Mammary epithelial cell (primary cell): ENCODE measurements at regions of chr17 and their contacts with region 1.

Region 1: GRCh38 chr17:10875979-10876555 is 38.2 kb upstream of the PIRT start:
- DNase-seq: peak; percentile 11
- H3K4me3 ChIP-seq: no peak overlapping the region
- H3K27ac ChIP-seq: no peak overlapping the region
- H3K4me1 ChIP-seq: no peaks in the 10 kb centered on the region
- H3K27me3 ChIP-seq: no peaks in the 10 kb centered on the region
- CTCF ChIP-seq: peak; percentile 34 to 62

Region 2: GRCh38 chr17:10798332-10798749 is 77.7 kb before region 1 on chr17:
- CTCF ChIA-PET with region 1: no interaction called
- dilution Hi-C with region 1: loop called (anchors 5 kb)
- in situ Hi-C with region 1: no loop called
- intact Hi-C with region 1: no loop called
- DNase-seq: no peak
- H3K4me3 ChIP-seq: no peak overlapping the region
- H3K27ac ChIP-seq: no peak overlapping the region
- H3K4me1 ChIP-seq: no peaks in the 10 kb centered on the region
- H3K27me3 ChIP-seq: no peaks in the 10 kb centered on the region
- CTCF ChIP-seq: no peak

Region 3: GRCh38 chr17:10939366-10939765 is 63.3 kb after region 1 on chr17:
- CTCF ChIA-PET with region 1: no interaction called
- dilution Hi-C with region 1: no loop called
- in situ Hi-C with region 1: no loop called
- intact Hi-C with region 1: no loop called
- DNase-seq: no peak
- H3K4me3 ChIP-seq: no peak overlapping the region
- H3K27ac ChIP-seq: no peak overlapping the region
- H3K4me1 ChIP-seq: no peaks in the 10 kb centered on the region
- H3K27me3 ChIP-seq: no peaks in the 10 kb centered on the region
- CTCF ChIP-seq: no peak

Region 4: DNA sequence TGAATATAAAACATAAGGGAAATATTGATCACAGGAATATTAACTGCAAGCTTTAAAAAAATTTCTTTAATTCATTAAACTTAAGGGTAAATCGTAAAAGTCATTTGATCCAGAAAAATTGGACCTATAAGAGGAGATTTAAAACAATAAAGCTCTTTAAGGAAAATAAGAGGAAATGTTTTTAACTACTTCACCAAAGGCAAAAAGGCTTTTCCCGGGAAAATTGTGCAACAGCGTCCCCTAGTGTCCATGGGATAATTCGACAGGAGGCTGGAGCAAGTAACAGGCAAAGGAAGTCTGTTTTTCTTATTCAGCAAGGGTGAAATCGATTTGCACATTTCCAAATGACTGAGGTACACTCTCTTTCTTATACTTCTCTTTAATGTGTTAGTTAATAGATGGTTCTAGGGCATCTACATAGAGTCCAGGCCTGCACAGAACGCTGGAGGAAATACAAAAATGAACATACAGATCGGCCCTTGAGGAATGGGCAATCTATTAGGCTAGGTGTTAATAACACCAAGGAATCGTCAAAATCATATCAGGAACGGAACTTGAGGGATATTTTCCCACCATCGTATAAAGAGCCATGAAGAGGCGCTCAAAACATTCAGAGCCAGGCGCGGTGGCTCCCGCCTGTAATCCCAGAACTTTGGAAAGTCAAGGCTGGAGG is 1059.8 kb after region 1 on chr17:
- CTCF ChIA-PET with region 1: no interaction called
- dilution Hi-C with region 1: no loop called
- in situ Hi-C with region 1: no loop called
- intact Hi-C with region 1: loop called (anchors 1 kb)
- DNase-seq: peak; percentile 51
- H3K4me3 ChIP-seq: no peak overlapping the region
- H3K27ac ChIP-seq: no peak overlapping the region
- H3K4me1 ChIP-seq: no peaks in the 10 kb centered on the region
- H3K27me3 ChIP-seq: no peaks in the 10 kb centered on the region
- CTCF ChIP-seq: peak; percentile 99

Region 5: GRCh38 chr17:12256380-12256995 is 1380.4 kb after region 1 on chr17:
- CTCF ChIA-PET with region 1: interaction called, 11 read pairs
- dilution Hi-C with region 1: no loop called
- in situ Hi-C with region 1: no loop called
- intact Hi-C with region 1: no loop called
- DNase-seq: peak; percentile 16
- H3K4me3 ChIP-seq: no peak overlapping the region
- H3K27ac ChIP-seq: no peak overlapping the region
- H3K4me1 ChIP-seq: no peaks in the 10 kb centered on the region
- H3K27me3 ChIP-seq: no peaks in the 10 kb centered on the region
- CTCF ChIP-seq: peak; percentile 62 to 65